Activated CD8-positive, alpha-beta T cell treated with anti-CD3 and anti-CD28 coated beads, Interleukin-2, amount 10 ng/mL, durations not matched to agents 7 days and 5 days (primary cell): ENCODE measurements at regions of chr20 and their contacts with region 1.

Region 1: DNA sequence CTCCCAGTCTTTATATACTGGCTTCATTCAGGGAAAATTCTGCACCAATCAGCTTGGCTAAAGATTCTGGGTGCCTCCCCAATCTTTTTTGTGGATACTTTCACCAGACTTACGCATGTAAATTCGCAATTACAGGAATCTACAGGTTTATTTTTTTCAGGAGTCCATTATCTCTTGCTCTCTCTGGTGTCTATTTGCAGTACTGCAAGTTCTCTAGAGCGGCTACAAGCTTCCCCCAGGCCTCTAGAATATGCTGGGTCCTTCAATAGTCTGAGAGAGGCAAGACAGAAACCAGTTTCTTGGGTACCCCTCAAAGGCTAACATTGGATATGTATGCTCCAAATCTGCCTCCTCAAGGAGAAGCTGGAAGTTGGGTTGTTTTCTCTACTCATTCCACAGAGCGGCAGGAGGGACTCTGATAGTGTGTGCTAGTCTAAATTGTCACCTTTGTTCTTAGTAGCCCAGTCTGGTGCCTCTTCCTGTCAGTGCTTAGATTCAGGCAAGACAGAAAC is 58.5 kb downstream of the SUN5 start:
- DNase-seq: peak; percentile 59
- ATAC-seq: peak; percentile 95
- H3K4me3 Mint-ChIP-seq: peak overlapping the region; percentile 37
- H3K27ac Mint-ChIP-seq: peak overlapping the region; percentile 86
- H3K4me1 Mint-ChIP-seq: peaks cover 31% of the 10 kb centered on the region
- H3K27me3 Mint-ChIP-seq: no peaks in the 10 kb centered on the region

Region 2: GRCh38 chr20:32894026-32894483 is 51.7 kb before region 1 on chr20:
- CTCF ChIA-PET with region 1: interaction called, 14 read pairs
- POLR2A ChIA-PET with region 1: no interaction called
- DNase-seq: no peak
- ATAC-seq: no peak
- H3K4me3 Mint-ChIP-seq: no peak overlapping the region
- H3K27ac Mint-ChIP-seq: no peak overlapping the region
- H3K4me1 Mint-ChIP-seq: peaks cover 11% of the 10 kb centered on the region
- H3K27me3 Mint-ChIP-seq: no peaks in the 10 kb centered on the region

Region 3: DNA sequence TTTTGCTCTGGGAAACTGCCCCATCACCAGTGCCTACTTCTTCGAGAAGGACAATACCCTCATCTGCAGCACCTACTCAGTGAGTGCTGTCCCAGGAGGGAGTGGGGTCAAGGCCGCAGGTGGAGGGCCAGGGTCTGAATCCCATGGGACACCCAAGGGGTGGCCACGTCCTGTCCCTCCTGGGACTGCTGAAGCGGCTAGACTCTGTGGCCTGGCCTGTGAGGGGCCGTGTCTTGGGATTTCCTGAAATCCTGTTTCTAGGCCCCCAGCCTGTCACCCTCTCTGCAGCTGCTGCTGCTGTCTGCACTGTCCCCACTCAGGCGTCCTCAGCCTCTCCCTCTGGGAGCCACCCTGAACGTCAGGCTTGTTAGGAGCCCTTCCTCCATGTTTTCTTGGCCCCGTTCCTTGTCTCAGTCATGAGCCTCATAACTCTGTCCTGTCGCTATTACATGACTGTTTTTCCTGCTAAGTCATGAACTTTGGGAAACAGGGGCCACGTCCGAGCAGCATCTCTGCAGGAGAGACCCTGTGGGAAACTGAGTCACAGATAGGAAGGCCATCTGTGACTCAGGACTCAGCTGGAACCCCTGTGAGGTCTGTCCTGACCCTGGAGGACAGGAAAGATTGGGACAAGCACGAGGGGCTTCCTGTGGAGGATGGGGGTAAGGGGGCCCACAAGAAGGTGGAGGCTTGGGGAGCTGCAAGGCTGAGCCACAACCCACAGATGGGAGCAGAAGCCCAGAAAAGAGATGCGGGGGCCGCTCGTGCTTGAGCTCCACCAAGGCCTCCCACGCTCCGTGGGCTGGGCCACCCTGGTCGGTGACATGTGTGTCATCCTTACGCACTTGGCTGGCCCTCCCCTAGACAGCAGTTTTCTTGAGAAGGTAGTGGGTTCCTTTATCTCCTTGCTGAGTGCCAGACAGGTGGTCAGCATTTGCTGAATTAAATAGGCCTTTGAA is 37.2 kb before region 1 on chr20:
- CTCF ChIA-PET with region 1: interaction called, 15 read pairs
- POLR2A ChIA-PET with region 1: no interaction called
- DNase-seq: no peak
- ATAC-seq: no peak
- H3K4me3 Mint-ChIP-seq: no peak overlapping the region
- H3K27ac Mint-ChIP-seq: no peak overlapping the region
- H3K4me1 Mint-ChIP-seq: peaks cover 13% of the 10 kb centered on the region
- H3K27me3 Mint-ChIP-seq: no peaks in the 10 kb centered on the region

Region 4: DNA sequence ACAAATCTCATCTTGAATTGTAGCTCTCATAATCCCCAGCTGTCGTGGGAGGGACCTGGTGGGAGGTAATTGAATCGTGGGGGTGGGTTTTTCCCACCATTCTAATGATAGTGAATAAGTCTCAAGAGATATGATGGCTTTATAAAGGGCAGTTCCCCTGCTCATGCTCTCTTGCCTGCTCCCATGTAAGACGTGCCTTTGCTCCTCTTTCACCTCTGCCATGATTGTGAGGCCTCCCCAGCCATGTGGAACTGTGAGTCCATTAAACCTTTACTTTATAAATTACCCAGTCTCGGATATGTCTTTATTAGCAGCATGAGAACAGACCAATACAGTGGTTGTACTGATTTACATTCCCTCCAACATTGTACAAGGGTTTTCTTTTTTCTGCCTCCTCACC is 11.2 kb before region 1 on chr20:
- CTCF ChIA-PET with region 1: interaction called, 29 read pairs
- POLR2A ChIA-PET with region 1: no interaction called
- DNase-seq: no peak
- ATAC-seq: no peak
- H3K4me3 Mint-ChIP-seq: no peak overlapping the region
- H3K27ac Mint-ChIP-seq: no peak overlapping the region
- H3K4me1 Mint-ChIP-seq: no peaks in the 10 kb centered on the region
- H3K27me3 Mint-ChIP-seq: no peaks in the 10 kb centered on the region

Region 5: GRCh38 chr20:32966881-32967781 is 21.4 kb after region 1 on chr20:
- CTCF ChIA-PET with region 1: interaction called, 71 read pairs
- POLR2A ChIA-PET with region 1: interaction called, 26 read pairs
- DNase-seq: peak; percentile 89
- ATAC-seq: peak; percentile 51
- H3K4me3 Mint-ChIP-seq: peak overlapping the region; percentile 69
- H3K27ac Mint-ChIP-seq: no peak overlapping the region
- H3K4me1 Mint-ChIP-seq: peaks cover 80% of the 10 kb centered on the region
- H3K27me3 Mint-ChIP-seq: no peaks in the 10 kb centered on the region

Region 6: DNA sequence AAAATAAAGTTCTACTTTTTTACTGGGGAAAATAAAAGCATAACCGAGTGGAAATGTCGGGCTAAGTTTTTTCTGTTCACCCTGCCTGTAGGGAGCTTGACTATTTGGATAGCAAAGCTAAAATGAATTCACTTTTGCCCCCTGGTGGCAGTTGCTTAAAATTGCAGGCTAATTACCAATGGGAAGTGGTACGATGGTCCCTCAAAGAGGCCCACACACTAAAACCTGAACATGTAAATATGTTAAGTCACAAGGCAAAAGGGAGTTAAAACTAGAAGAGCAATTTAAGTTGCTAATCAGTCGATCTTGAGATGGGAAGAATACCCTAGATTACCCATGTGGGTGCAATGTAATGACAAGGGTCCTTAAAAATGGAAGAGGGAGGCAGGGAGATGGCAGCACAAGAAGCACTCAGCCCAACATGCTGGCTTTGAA is 59.4 kb after region 1 on chr20:
- CTCF ChIA-PET with region 1: interaction called, 47 read pairs
- POLR2A ChIA-PET with region 1: no interaction called
- DNase-seq: peak; percentile 59
- ATAC-seq: no peak
- H3K4me3 Mint-ChIP-seq: no peak overlapping the region
- H3K27ac Mint-ChIP-seq: peak overlapping the region; percentile 32
- H3K4me1 Mint-ChIP-seq: peaks cover 3% of the 10 kb centered on the region
- H3K27me3 Mint-ChIP-seq: no peaks in the 10 kb centered on the region

Region 7: DNA sequence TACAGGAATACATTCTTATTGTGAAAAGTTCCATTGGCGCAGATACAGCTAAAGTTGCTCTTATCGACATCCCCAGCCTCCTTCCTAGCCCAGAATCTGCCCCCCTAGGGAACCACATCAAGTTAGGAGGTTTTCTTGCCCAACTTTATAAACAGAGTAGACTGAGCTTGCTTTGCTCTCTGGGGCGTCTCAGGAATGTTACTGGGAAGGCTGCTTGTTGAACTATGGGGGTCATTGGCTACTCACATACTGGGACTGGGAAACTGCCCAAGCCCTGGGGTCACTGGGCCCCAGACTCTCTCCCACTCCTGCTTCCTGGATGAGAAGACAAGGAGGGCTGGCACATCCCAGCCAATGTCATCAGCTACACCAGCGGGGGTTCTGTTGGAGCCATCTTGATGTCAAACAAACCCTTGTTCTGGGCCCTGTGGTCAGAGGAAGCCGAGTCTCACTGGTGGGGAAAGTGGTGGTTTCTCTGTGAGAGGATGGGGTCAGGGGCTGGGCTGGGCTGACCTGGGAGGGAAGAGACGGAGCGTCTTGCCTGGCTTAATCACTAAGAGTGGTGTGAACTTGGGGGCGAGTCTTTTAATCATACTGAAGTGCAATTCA is 159.7 kb after region 1 on chr20:
- CTCF ChIA-PET with region 1: no interaction called
- POLR2A ChIA-PET with region 1: no interaction called
- DNase-seq: no peak
- ATAC-seq: no peak
- H3K4me3 Mint-ChIP-seq: no peak overlapping the region
- H3K27ac Mint-ChIP-seq: no peak overlapping the region
- H3K4me1 Mint-ChIP-seq: no peaks in the 10 kb centered on the region
- H3K27me3 Mint-ChIP-seq: no peaks in the 10 kb centered on the region

Region 8: DNA sequence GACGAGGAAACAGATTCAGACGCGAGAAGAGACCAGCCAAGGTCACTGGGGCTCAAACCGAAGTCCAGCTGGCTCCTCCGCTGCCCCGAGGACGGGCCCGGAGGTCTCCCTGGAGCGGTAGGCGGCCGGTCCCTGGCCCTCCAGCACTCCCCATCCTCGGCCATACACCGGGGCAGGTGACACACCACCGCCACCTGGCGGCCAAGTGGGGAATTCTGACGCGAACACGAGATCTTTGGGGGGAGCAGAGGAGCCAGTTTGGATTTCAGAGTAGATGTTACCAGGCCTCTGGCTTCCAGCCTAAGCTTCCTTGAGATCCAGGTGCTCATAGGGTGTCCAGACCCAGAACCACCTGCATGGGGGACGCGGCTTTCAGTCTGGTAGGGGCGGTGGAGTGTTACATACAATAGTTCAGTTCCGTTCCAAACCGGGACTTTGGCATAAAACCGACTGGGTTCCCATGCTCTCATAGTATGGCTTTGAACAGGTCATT is 353.4 kb after region 1 on chr20:
- CTCF ChIA-PET with region 1: no interaction called
- POLR2A ChIA-PET with region 1: no interaction called
- DNase-seq: peak; percentile 80
- ATAC-seq: peak; percentile 91
- H3K4me3 Mint-ChIP-seq: no peak overlapping the region
- H3K27ac Mint-ChIP-seq: no peak overlapping the region
- H3K4me1 Mint-ChIP-seq: peaks cover 2% of the 10 kb centered on the region
- H3K27me3 Mint-ChIP-seq: peaks cover 12% of the 10 kb centered on the region

Region 9: DNA sequence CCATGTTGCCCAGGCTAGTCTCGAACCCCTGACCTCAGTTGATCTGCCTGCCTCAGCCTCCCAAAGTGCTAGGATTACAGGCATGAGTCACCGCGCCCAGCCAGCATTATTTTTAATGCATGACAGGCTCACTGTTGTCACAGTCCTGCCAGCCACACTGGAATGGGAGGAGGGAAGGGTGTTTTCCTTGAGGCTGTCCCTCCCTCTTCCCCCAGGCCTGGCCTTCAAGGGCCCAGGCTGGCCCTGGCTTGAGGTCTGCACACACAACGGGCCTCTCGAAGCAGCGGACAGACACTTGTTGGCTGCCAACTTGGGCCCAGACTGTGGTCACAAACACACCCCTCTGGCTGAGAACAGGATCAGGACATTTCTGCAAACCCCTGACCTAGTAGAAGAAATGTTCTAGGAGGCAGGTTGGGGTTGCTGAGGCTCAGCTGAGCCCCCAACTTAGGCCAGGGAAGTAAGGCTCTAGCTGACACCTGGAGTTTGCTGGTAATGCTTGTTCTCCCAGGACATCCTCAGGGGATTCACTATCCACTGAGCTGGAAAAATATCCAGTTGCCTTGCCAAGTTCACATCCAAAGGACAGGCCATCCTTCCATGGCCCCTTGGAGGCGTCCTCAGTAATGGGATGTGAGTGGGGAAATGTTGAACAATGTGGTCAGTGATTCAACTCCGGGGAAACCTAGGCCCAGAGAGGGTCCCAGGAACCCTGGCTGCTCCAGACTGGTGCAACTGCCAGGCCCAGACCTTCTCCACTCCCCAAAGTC is 487.9 kb after region 1 on chr20:
- CTCF ChIA-PET with region 1: no interaction called
- POLR2A ChIA-PET with region 1: no interaction called
- DNase-seq: no peak
- ATAC-seq: no peak
- H3K4me3 Mint-ChIP-seq: no peak overlapping the region
- H3K27ac Mint-ChIP-seq: no peak overlapping the region
- H3K4me1 Mint-ChIP-seq: no peaks in the 10 kb centered on the region
- H3K27me3 Mint-ChIP-seq: no peaks in the 10 kb centered on the region